ENCODE measurements at regions of chr19 and their contacts with region 1.

Region 1: DNA sequence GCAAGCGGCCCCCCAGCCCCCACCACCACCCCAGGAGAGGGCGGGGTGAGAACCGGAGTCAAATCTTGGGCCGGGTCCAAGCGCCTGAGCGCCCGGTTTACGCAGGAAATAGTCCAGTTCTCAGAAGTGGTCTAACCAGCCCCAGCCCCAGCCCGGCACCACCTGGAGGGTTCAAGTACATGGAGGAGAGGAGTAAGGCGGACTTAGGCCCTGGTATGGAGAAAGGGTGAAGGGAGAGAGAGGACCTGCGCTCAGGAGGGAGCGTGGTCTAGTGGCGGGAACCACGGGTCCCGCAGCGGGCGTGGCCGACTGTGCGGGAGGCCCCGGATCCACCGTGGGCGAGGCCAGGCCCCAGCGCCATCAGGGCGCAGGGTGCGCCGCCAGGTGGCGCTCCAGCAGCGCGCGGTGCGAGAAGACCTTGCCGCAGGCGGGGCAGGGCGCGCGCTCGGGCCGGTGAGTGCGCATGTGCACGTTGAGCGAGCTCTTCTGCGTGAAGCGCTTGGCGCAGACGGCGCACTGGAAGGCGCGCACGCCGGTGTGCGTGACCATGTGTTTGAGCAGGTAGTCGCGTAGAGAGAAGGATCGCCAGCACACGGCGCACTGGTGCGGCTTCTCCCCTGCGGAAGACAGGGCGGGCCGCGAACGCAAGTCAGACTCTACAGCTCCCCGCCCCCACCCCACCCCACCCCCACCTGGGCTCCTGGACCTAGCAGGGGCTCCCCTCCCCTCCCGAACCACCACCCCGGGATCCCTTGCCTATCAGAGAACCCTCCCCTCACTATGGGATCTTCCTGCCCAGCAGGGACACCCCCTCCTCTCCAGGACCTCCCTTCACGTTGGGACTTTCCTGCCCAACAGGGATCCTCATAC is 2.1 kb upstream of the SLC27A5 start:
- DNase-seq: peak; percentile 99
- ATAC-seq: peak; percentile 88
- H3K4me3 Mint-ChIP-seq: peak overlapping the region; percentile 88
- H3K27ac Mint-ChIP-seq: peak overlapping the region; percentile 81
- H3K4me1 Mint-ChIP-seq: peaks cover 27% of the 10 kb centered on the region
- H3K27me3 Mint-ChIP-seq: no peaks in the 10 kb centered on the region

Region 2: DNA sequence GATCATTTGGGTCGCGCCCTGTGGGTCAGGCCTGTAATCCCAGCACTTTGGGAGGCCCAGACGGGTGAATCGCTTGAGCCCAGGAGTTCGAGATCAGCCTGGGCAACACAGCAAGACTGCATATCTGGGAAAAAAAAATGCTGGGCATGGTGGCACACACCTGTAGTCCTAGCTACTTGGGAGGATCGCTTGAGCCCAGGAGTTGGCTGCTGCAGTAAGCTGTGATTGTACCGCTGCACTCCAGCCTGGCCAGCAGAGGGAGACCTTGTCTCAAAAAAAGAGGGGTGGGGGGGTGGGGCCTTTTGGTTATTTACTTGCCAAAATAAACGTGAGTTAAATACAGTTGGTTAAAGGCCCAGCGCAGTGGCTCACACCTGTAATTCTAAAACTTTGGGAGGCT is 295.0 kb before region 1 on chr19:
- CTCF ChIA-PET with region 1: no interaction called
- POLR2A ChIA-PET with region 1: no interaction called
- intact Hi-C with region 1: loop called in 1 of 2 experiments (anchors 1 kb)
- DNase-seq: peak; percentile 70
- ATAC-seq: peak; percentile 88
- H3K4me3 Mint-ChIP-seq: no peak overlapping the region
- H3K27ac Mint-ChIP-seq: no peak overlapping the region
- H3K4me1 Mint-ChIP-seq: no peaks in the 10 kb centered on the region
- H3K27me3 Mint-ChIP-seq: no peaks in the 10 kb centered on the region

Region 3: GRCh38 chr19:58408152-58409009 is 105.5 kb before region 1 on chr19 and contains the start of gene ZNF584:
- CTCF ChIA-PET with region 1: interaction called, 3 read pairs
- POLR2A ChIA-PET with region 1: interaction called, 4 read pairs
- intact Hi-C with region 1: loop called (anchors 1 to 5 kb)
- DNase-seq: peak; percentile 97
- ATAC-seq: peak; percentile 97
- H3K4me3 Mint-ChIP-seq: peak within 1 kb of the TSS; percentile 84
- H3K27ac Mint-ChIP-seq: peak within 1 kb of the TSS; percentile 92
- H3K4me1 Mint-ChIP-seq: peaks cover 29% of the 10 kb centered on the region
- H3K27me3 Mint-ChIP-seq: no peaks in the 10 kb centered on the region
- total RNA-seq, gene ZNF584: 9.9 to 11.2 TPM

Region 4: DNA sequence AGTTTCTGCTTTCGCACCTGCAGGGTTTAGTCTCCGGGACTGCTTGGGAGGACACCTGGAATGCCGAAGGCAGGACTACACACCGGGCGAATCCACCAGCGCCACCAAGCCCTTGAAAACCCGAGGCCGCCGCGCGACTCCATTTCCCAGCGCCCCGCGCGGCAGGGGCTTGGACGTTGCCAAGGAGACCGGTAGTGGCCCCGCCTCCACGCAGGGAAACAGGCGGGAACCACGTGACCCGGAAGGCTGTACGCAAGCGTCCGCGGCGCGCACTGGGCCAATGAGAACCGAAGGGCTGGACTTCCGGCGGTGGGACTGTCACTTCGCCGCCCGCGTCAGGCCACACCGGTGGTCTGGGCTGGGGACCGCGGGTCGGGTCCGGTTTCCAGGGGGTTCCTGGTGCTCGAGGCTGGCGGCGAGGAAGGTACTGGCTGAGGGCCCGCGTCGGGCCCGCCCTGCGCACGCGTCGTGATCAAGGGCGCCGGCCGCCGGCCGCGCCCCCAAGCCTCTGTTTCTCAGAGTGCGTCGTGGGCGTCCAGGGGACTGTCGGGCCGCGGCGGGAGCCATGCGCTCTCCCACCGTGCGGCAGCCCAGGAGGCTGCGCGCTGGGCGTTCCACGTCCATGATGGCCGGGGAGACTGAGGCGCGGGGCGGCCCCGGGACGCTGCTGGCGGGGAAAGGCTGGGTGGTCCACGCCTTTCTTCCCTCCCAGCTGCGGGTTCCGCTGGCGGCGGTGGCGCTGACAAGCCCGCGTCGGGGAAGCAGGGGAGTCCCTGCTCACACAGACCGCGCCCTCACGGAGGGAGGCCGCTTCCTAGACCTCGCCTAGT is 47.0 kb before region 1 on chr19 and contains the start of gene ZNF324:
- CTCF ChIA-PET with region 1: no interaction called
- POLR2A ChIA-PET with region 1: no interaction called
- intact Hi-C with region 1: loop called in 1 of 2 experiments (anchors 1 kb)
- DNase-seq: peak; percentile 99
- ATAC-seq: peak; percentile 98
- H3K4me3 Mint-ChIP-seq: peak within 1 kb of the TSS; percentile 86
- H3K27ac Mint-ChIP-seq: peak within 1 kb of the TSS; percentile 47
- H3K4me1 Mint-ChIP-seq: peaks cover 22% of the 10 kb centered on the region
- H3K27me3 Mint-ChIP-seq: peaks cover 2% of the 10 kb centered on the region
- total RNA-seq, gene ZNF324: 4.7 to 7.5 TPM

Region 5: GRCh38 chr19:58572818-58573657 is 59.1 kb after region 1 on chr19 and contains the start of gene MZF1:
- CTCF ChIA-PET with region 1: interaction called, 78 read pairs
- POLR2A ChIA-PET with region 1: interaction called, 5 read pairs
- intact Hi-C with region 1: loop called (anchors 1 kb)
- DNase-seq: peak; percentile 100
- ATAC-seq: peak; percentile 69
- H3K4me3 Mint-ChIP-seq: peak within 1 kb of the TSS; percentile 95
- H3K27ac Mint-ChIP-seq: peak within 1 kb of the TSS; percentile 100
- H3K4me1 Mint-ChIP-seq: peaks cover 38% of the 10 kb centered on the region
- H3K27me3 Mint-ChIP-seq: no peaks in the 10 kb centered on the region
- total RNA-seq, gene MZF1: 14.3 to 15.0 TPM